ENCODE measurements at regions of chr7 and their contacts with region 1.

Region 1: GRCh38 chr7:43083106-43083505 is 29.3 kb upstream of the HECW1 start:
- DNase-seq: no peak

Region 2: DNA sequence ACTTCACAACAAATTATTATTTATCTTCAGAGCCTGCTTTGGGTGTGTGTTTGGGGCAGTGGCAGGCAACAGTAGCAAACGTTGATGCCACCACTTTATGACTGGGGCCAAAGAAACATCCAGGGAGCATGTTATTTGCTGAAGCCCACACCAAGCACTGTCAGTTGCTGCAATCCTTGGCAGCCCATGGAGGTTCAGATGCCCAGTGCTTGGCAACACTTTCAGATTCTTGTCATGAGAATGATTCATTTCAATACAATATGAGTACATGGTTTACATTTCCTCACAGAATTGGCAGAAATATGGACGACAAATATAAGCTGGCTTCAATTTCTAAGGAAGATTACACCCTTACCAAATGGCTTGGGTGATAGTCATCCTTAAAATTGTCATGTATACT is 799.6 kb before region 1 on chr7:
- intact Hi-C with region 1: no loop called
- DNase-seq: peak in 6 of 10 donors; percentile 9 to 81 (median 40)

Region 3: GRCh38 chr7:43004082-43004481 is 79.0 kb before region 1 on chr7:
- intact Hi-C with region 1: no loop called
- DNase-seq: no peak

Region 4: GRCh38 chr7:43034535-43035002 is 48.5 kb before region 1 on chr7:
- intact Hi-C with region 1: loop called (anchors 5 kb)
- DNase-seq: no peak